Breast epithelium (tissue), 4 donors: ENCODE measurements at regions of chr1 and their contacts with region 1.

Region 1: DNA sequence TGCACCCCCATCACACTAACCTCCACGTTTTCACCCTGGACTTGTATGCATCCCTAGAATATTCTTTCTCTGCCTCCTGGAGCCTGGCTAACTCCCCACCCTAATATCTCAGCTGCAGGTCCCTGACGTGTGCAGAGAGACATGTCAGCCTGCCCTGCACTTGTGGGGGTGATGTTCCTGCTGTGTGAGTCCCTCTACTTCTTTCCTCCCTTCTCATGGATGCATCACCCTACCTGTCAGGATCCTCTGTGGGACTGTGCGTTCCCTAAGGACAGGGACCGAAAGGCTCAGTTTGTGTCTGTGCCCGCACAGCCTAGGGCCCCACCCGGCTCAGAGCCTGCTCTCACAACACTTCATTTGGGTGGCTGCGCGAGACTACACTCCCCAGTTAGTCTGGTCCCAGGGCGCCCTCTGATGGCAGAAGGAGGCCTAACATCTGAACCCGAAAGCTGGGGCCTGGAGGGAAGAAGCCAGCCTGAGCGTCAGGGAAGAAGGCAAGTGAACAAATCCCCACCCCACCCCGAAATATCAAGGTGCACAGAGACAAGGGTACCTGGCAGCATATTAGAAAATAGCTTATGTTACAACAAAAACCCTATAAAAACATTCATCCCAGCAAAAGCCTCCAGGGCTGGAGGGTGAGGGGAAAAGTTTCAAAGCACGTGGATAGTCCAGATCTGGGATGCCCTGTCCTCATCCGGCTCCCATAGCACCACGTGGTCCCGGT is 3.7 kb downstream of the CD52 start:
- DNase-seq: peak; percentile 88 to 89
- H3K4me3 ChIP-seq: no peak overlapping the region
- H3K27ac ChIP-seq: no peak overlapping the region
- H3K4me1 ChIP-seq: peaks cover 0 to 4% of the 10 kb centered on the region in 2 donors
- H3K27me3 ChIP-seq: no peaks in the 10 kb centered on the region
- CTCF ChIP-seq: peak; percentile 83 to 93 (median 92)
- POLR2A ChIP-seq: no peak

Region 2: GRCh38 chr1:26279456-26280332 is 41.8 kb before region 1 on chr1 and contains the start of gene SH3BGRL3:
- intact Hi-C with region 1: loop called (anchors 5 kb)
- DNase-seq: peak; percentile 80 to 84
- H3K4me3 ChIP-seq: peak within 1 kb of the TSS; percentile 91 to 95 (median 93)
- H3K27ac ChIP-seq: peak within 1 kb of the TSS; percentile 95 to 97
- H3K4me1 ChIP-seq: peaks cover 11 to 34% of the 10 kb centered on the region in 2 donors
- H3K27me3 ChIP-seq: no peaks in the 10 kb centered on the region
- CTCF ChIP-seq: peak in 2 of 3 donors; percentile 11 to 14
- POLR2A ChIP-seq: no peak
- total RNA-seq, gene SH3BGRL3: 27.5 to 55.7 (median 50.1) TPM

Region 3: GRCh38 chr1:26378088-26378878 is 56.8 kb after region 1 on chr1:
- intact Hi-C with region 1: no loop called
- DNase-seq: no peak
- H3K4me3 ChIP-seq: no peak overlapping the region
- H3K27ac ChIP-seq: no peak overlapping the region
- H3K4me1 ChIP-seq: no peaks in the 10 kb centered on the region
- H3K27me3 ChIP-seq: no peaks in the 10 kb centered on the region
- CTCF ChIP-seq: no peak
- POLR2A ChIP-seq: no peak

Region 4: GRCh38 chr1:26799479-26800142 is 478.1 kb after region 1 on chr1:
- intact Hi-C with region 1: no loop called
- DNase-seq: peak; percentile 38 to 71
- H3K4me3 ChIP-seq: peak overlapping the region in 1 of 3 donors; percentile 20
- H3K27ac ChIP-seq: peak overlapping the region; percentile 60 to 90
- H3K4me1 ChIP-seq: no peaks in the 10 kb centered on the region
- H3K27me3 ChIP-seq: no peaks in the 10 kb centered on the region
- CTCF ChIP-seq: no peak
- POLR2A ChIP-seq: no peak